ENCODE measurements at regions of chr15 and their contacts with region 1.

Region 1: GRCh38 chr15:70569091-70569621 is 194.2 kb downstream of the UACA start:
- DNase-seq: peak in 4 of 10 donors; percentile 17 to 58 (median 26)

Region 2: GRCh38 chr15:70636540-70637165 is 67.5 kb after region 1 on chr15:
- intact Hi-C with region 1: loop called (anchors 2 kb)
- DNase-seq: peak in 4 of 10 donors; percentile 23 to 52 (median 42)

Measured in posterior cingulate gyrus (tissue), 11 donors.